HepG2 (cell line): ENCODE measurements at regions of chr2 and their contacts with region 1.

Region 1: GRCh38 chr2:162890690-162891311 is 52.2 kb upstream of the KCNH7 start:
- DNase-seq: peak; percentile 62
- ATAC-seq: peak; percentile 86
- H3K4me3 ChIP-seq: no peak overlapping the region
- H3K27ac ChIP-seq: no peak overlapping the region
- H3K4me1 ChIP-seq: no peaks in the 10 kb centered on the region
- H3K27me3 ChIP-seq: no peaks in the 10 kb centered on the region; a peak in 1 of 5 replicates
- CTCF ChIP-seq: peak; percentile 86
- EP300 ChIP-seq: no peak
- POLR2A ChIP-seq: no peak
- RAD21 ChIP-seq: peak; percentile 51

Region 2: GRCh38 chr2:162938387-162938786 is 47.6 kb after region 1 on chr2:
- CTCF ChIA-PET with region 1: no interaction called
- POLR2A ChIA-PET with region 1: no interaction called
- in situ Hi-C with region 1: no loop called
- intact Hi-C with region 1: no loop called
- DNase-seq: no peak
- ATAC-seq: peak; percentile 97
- H3K4me3 ChIP-seq: no peak overlapping the region
- H3K27ac ChIP-seq: no peak overlapping the region
- H3K4me1 ChIP-seq: no peaks in the 10 kb centered on the region
- H3K27me3 ChIP-seq: no peaks in the 10 kb centered on the region
- CTCF ChIP-seq: peak; percentile 49
- EP300 ChIP-seq: no peak
- POLR2A ChIP-seq: no peak
- RAD21 ChIP-seq: no peak

Region 3: DNA sequence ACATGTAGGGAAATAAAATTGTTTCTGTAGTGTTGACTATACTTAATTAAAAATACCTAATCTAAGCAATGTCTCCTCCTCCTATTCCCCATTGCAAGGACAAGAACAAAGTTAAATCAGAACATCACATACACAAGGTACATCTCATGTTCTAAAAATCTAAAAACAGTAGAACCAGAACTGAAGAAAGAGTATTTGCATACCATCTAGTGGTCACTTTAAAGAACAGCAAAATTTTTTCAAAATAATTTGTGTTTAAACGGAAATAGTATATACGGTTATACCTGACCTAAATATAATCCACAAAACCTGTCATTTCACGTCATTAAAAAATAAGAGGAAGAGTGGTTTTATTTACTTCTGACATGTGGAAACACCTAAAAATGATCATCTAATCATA is 242.0 kb after region 1 on chr2:
- CTCF ChIA-PET with region 1: interaction called, 31 read pairs
- POLR2A ChIA-PET with region 1: no interaction called
- in situ Hi-C with region 1: loop called (anchors 10 kb)
- intact Hi-C with region 1: loop called (anchors 1 kb)
- DNase-seq: peak; percentile 5
- ATAC-seq: no peak
- H3K4me3 ChIP-seq: no peak overlapping the region
- H3K27ac ChIP-seq: no peak overlapping the region
- H3K4me1 ChIP-seq: no peaks in the 10 kb centered on the region
- H3K27me3 ChIP-seq: no peaks in the 10 kb centered on the region
- CTCF ChIP-seq: peak; percentile 42
- EP300 ChIP-seq: no peak
- POLR2A ChIP-seq: no peak
- RAD21 ChIP-seq: no peak